Head of caudate nucleus (tissue), 42 donors: ENCODE measurements at regions of chr1 and their contacts with region 1.

Region 1: DNA sequence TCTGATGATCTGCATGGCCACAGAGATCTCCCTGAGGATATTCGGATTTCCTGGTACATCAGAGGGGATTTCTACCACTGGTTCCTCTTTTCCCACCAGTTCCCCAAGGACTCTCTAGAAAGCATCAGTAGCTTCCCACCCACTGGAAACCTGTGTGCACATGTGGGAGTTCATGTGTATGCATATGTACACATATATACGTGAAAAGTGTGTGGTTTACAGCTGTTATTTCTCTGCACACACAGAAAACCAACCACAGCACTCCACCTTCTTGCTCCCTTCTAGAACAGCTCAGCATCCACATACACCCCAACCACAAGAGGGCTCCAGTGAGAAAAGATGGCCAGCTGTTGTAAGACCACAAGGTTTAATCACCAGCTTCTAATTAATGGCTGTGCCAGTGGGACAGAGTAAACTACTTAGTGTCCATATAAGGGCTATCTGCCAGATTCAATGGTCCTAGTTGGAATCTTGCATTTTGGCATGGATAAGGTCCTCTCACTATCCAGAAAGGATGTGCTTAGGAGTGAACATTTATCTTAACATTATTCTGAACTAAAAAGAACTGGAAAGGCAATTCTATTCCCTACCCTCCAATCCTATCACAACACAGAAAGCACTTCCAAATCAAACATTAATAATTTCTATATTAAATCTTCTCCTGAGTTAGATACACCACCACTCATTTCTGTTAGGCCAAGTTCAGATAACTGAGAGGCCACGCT is 24.1 kb downstream of the GPR3 start:
- DNase-seq: peak in 13 of 42 donors; percentile 35 to 78 (median 59)

Region 2: DNA sequence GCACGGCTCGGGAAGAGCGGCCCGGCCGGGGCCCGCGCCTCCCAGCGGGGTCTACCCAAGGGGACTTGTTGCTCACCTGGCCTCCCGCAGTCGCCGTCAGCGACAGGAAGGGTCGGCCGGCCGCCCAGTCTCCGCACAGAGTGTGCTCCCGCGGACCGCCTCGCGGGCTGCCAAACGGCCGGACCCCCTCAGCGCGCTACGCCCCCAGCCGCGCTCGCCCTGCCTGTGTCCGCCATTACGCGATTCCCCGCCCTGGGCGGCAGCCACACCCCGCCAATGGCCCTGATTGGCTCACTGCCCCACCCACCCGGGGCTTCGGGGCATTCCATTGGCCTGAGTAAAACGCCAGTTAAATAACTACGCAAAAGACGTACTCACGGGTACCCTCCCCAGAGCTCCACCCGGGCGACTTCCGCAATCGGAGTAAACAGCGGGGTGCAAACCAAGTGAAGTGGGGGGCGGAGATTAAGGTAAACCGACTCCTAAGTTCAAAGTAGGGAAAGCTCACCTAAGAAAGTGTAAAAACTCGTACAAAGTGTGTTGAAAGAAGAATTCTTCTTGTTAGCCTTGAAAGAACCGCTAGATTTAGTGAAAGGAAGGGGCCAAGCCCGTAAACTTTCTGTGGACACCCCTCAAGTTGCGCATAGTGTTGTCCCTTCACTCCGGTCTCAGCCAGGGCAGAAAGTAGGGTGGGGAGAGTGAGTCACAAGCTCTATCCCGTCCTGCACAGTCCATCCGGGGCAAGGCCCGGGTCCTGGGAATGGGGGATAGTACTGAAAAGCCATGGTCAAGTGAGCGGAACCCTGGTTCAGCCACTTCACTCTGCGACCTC is 73.6 kb after region 1 on chr1 and contains the start of gene WASF2:
- intact Hi-C with region 1: loop called (anchors 10 kb)
- DNase-seq: peak; percentile 95 to 99 (median 98)